Endothelial cell of umbilical vein (primary cell): ENCODE measurements at regions of chr19 and their contacts with region 1.

Region 1: GRCh38 chr19:50349277-50350057 is 16.0 kb downstream of the NAPSA start:
- DNase-seq: peak; percentile 79
- H3K4me3 ChIP-seq: no peak overlapping the region
- H3K27ac ChIP-seq: peak overlapping the region; percentile 78
- H3K4me1 ChIP-seq: peaks cover 10% of the 10 kb centered on the region
- H3K27me3 ChIP-seq: peaks cover 0 to 2% of the 10 kb centered on the region in 2 experiments
- CTCF ChIP-seq: no peak
- POLR2A ChIP-seq: no peak

Region 2: GRCh38 chr19:50300814-50301606 is 48.5 kb before region 1 on chr19:
- CTCF ChIA-PET with region 1: no interaction called
- POLR2A ChIA-PET with region 1: no interaction called
- dilution Hi-C with region 1: no loop called
- intact Hi-C with region 1: loop called (anchors 1 kb)
- DNase-seq: peak; percentile 91
- H3K4me3 ChIP-seq: no peak overlapping the region
- H3K27ac ChIP-seq: peak overlapping the region; percentile 66
- H3K4me1 ChIP-seq: peaks cover 16% of the 10 kb centered on the region
- H3K27me3 ChIP-seq: peaks cover 0 to 3% of the 10 kb centered on the region in 2 experiments
- CTCF ChIP-seq: no peak
- POLR2A ChIP-seq: no peak